Aorta (tissue), 5 donors: ENCODE measurements at regions of chr15 and their contacts with region 1.

Region 1: DNA sequence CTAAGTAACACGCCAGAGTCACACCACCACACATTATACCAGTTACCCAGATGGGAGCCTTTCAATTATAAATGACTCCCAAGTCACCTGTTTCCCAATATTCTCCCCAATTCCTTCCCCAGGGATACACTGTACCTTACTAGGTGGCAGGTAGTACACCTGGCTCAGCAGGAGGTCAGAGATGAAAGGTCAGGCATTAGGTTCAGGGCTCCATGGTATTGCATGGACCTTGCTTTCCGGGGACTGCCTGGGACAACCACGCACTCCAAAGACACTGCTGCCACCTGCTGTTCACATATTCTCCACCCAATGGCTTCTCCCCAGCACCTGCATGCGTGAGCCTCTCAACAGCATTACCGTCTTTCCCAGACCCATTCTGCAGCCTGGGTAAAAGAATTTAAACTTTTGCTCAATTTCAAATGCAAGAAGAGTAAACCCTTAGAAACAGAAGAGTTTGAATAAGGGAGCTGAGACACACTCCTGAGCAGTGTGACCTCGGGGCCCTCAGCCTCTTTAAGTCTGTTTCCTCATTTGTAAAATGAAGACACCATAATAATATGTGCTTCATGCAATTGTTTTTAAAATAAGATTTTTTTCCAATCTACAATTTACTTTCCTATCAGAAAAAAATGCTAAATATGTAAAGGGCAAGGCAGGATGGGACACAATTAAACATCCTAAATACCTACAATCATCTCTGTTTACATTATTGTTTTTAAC is 28.0 kb upstream of the LACTB start:
- DNase-seq: peak; percentile 86 to 89
- ATAC-seq: peak; percentile 96
- H3K4me3 ChIP-seq: no peak overlapping the region
- H3K27ac ChIP-seq: no peak overlapping the region
- H3K4me1 ChIP-seq: no peaks in the 10 kb centered on the region
- H3K27me3 ChIP-seq: no peaks in the 10 kb centered on the region

Region 2: DNA sequence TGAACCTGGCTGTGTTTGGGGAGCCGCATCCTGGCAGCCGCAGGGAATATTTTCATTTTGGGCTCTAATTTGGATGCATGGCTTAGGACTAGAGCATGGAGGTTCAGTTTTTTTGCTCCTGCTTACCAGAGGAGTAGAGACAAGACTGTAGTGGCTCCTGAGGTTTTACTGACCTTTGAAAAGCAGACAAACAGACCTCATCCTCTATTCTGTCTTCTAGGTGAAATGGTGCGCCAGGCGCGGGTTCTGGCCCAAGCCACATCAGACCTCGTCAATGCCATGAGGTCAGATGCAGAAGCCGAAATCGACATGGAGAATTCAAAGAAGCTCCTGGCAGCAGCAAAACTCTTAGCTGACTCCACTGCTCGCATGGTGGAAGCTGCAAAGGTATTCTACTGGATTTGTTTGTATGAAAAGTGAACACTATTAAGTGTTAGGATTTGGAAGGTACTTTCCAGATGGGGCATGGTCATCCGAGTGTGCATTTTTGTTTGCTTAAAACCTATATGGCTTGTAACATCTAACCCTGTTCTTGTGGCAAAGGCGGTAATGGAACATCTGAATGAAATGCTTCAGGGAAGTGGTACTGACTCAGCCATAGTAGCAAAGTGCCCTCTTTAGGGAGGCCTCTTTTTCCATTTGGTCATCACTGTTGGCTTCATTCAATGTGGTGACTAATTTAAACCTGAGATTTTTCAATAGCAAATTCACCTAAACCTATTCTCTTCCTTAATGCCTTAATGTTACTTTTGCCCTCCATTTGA is 381.8 kb before region 1 on chr15:
- intact Hi-C with region 1: no loop called
- DNase-seq: no peak
- ATAC-seq: no peak
- H3K4me3 ChIP-seq: no peak overlapping the region
- H3K27ac ChIP-seq: no peak overlapping the region
- H3K4me1 ChIP-seq: no peaks in the 10 kb centered on the region
- H3K27me3 ChIP-seq: no peaks in the 10 kb centered on the region

Region 3: DNA sequence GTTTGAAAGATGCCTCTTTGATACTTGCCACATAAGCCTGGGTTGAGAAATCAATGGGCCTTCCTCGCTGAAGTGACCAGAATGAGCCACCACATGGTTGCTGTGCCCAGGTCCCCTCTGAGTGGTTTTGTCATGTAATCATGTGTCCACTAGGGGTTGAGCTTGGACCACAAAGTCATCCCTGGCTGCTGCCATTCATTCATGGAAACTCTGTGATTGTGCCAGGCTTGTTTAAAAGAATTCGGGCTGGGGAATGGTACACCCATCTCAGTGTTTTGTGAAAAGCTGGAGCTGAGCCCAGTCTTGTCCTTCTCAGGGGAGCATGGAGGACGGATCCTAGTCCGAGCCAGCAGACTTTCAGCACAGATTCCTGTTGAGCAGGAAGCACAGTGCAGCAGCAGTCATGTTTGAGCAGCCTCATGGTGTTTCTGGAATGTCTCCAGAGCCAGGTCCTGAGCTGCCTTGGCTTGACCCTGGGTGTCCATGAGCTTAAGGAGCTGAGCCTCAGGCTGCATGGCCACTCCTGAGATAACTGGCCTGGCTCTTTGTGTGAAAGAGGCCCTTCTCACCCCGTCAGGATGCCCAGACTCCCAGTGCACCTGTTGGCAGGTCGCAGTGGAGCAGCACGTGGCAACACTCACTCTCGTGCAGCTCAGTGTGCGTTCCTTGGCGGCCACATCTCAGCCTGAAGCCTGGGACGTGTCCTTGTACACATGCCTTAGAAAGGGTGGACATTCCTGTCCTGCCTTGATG is 311.4 kb before region 1 on chr15:
- intact Hi-C with region 1: loop called (anchors 1 to 2 kb)
- DNase-seq: peak; percentile 82 to 87
- ATAC-seq: peak; percentile 89
- H3K4me3 ChIP-seq: no peak overlapping the region
- H3K27ac ChIP-seq: peak overlapping the region in 1 of 2 donors; percentile 84
- H3K4me1 ChIP-seq: no peaks in the 10 kb centered on the region
- H3K27me3 ChIP-seq: no peaks in the 10 kb centered on the region

Region 4: DNA sequence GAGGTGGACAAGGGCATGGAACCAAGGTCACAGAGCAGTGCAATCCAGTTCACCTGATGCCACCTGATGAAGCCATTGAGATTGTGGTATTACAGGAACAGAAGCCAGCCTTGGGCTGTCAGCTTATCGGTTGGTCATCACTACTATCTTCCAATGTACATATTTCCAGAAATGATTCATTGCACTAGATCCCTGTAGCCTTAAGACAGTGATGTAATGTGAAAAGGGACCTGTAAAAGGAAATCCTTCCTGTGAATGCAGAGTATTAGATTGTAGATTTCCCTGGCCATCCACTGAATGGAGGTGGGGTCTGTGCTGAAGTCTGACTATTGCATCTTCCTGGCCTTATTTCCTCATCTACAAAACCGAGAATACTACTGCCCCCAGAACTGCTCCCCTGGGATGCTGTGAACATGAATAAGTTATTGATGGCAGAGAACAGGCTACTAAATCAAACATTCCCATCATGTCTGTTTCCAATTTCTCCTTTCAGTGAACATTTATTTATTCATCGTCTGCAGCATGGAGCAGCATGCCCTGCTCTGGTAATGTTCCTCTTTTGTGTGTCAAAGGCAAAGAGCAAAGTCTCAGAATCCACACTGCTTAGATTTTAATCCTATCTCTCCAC is 98.5 kb before region 1 on chr15:
- intact Hi-C with region 1: no loop called
- DNase-seq: no peak
- ATAC-seq: peak; percentile 19
- H3K4me3 ChIP-seq: no peak overlapping the region
- H3K27ac ChIP-seq: peak overlapping the region in 1 of 2 donors; percentile 11
- H3K4me1 ChIP-seq: no peaks in the 10 kb centered on the region
- H3K27me3 ChIP-seq: no peaks in the 10 kb centered on the region

Region 5: DNA sequence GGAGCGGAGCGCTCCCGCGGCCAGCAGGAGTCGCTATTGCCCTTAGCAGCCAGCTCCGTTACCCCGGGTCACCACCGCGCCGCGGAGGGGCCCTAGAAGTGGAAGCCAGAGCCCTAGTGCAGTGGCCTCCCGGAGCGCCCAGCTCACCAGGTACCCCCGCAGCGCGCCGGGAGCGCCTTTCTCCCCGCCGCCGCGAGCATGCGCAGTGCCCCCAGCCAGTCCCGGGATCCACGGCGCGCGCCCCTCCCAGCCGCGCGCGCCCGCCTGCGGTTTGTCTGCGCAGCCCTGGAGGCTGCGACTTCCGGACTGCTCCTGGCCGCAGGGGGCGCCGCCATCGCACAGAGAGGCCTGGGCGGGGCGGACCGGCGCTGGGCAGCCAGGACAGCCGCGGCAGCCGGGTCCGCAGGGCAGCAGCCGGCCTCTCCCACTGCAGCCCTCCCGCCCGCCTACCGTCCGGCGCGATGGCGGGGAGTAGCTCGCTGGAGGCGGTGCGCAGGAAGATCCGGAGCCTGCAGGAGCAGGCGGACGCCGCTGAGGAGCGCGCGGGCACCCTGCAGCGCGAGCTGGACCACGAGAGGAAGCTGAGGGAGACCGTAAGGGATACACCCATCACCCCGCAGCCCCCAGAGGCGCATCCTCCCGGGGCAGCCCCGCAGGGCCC is 45.4 kb before region 1 on chr15:
- intact Hi-C with region 1: loop called (anchors 2 to 5 kb)
- DNase-seq: peak; percentile 94 to 96
- ATAC-seq: peak; percentile 90
- H3K4me3 ChIP-seq: peak overlapping the region; percentile 95 to 98
- H3K27ac ChIP-seq: peak overlapping the region; percentile 17 to 65
- H3K4me1 ChIP-seq: peaks cover 0 to 6% of the 10 kb centered on the region in 2 donors
- H3K27me3 ChIP-seq: no peaks in the 10 kb centered on the region